Ovary (tissue), 10 donors: ENCODE measurements at regions of chr3 and their contacts with region 1.

Region 1: DNA sequence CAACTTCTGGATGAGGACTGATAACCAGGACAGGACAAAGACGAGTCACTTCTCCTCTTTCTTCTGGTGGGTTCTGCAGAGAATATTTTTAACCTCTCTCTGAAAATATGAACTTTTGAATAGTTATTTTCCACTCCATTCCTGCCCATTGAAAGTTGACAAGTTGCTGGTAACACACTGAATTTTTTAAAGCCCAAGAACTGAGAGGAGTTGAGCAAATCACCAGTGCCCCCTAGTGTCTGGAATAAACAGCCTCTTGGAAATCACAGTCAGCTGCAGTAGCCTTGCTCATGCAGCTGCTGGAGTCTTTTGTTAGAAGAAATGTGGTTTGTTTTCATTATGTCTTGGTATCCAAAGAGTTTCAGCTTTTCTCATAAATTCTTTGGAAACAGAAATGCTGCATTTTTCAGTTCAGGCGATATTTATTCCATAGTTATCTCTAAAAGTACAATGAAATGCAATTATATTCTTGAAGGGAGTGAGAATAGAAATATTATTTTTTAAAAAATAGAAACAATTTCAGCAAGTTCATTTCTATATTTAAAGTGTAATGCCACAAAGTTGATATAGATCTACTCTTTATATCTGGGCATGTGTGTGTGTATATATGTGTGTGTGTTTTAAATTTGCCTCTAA is 741.0 kb upstream of the CBLB start:
- DNase-seq: peak; percentile 44 to 81 (median 63)
- H3K4me3 ChIP-seq: no peak overlapping the region
- H3K27ac ChIP-seq: peak overlapping the region in 1 of 2 donors; percentile 21
- H3K4me1 ChIP-seq: peaks cover 2% of the 10 kb centered on the region
- H3K27me3 ChIP-seq: no peaks in the 10 kb centered on the region
- CTCF ChIP-seq: peak; percentile 72 to 78 (median 73)
- EP300 ChIP-seq: no peak
- POLR2A ChIP-seq: no peak

Region 2: DNA sequence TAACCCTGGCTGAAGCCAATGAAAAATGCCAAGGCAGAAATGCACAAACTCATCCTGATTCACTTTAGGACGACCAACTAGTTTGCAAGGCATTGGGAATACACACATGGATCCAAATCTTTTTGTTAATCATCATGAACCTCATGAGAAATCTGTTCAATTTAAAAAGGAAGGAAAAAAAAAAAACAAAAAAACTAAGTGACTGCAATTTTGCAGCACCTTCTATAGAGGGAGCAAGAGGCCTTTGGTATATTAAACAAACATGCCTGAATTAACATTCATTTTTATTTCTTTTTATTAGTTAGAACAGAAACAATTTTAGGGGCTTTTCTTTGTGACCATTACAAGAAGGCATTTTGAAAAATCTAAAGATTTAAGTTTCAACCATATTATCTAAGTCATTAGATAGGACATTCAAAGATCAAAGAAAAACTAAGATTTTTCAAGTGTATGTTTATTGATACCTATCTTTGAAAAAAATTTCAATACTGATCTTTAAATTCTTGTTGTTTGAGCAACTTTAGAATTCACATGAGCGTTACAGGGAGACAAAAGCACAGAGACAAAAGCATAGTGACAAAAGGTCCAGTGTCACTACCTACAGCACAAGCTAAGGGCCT is 923.4 kb before region 1 on chr3:
- intact Hi-C with region 1: loop called in 2 of 4 experiments (anchors 5 to 10 kb)
- DNase-seq: no peak
- H3K4me3 ChIP-seq: no peak overlapping the region
- H3K27ac ChIP-seq: no peak overlapping the region
- H3K4me1 ChIP-seq: no peaks in the 10 kb centered on the region
- H3K27me3 ChIP-seq: no peaks in the 10 kb centered on the region
- CTCF ChIP-seq: peak; percentile 29 to 61 (median 55)
- EP300 ChIP-seq: no peak
- POLR2A ChIP-seq: no peak

Region 3: DNA sequence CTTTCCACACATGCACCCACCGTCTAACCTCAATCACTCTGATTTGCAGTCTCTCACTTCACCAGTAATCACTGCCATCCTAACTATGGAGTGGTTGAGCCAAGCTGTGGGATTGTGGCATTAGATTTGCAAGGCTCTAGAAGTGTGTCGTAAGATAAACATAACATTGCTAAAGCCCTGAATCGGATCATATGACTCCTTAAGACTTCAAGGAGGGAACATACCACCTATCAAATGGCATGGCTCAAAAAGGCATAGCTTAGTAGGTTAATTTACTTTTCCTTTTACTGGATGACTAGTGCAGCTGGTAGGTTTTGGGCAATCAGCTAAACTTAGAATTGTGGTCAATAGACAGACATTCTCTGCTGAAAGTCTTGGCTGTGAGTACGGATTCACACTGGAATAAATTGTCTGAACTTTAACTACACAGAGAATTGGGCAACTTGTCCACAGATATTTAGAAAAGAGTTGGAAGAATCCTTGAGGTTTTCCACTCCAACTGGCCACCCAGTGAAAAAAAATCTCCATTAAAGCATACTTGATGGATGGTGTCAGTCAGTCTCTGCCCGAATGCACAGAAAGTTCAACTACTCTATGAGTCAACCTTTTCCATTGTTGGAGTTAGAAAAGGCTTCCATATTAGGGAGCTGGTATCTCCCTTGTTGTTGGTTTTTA is 264.3 kb before region 1 on chr3:
- intact Hi-C with region 1: no loop called
- DNase-seq: no peak
- H3K4me3 ChIP-seq: no peak overlapping the region
- H3K27ac ChIP-seq: no peak overlapping the region
- H3K4me1 ChIP-seq: no peaks in the 10 kb centered on the region
- H3K27me3 ChIP-seq: no peaks in the 10 kb centered on the region
- CTCF ChIP-seq: no peak
- EP300 ChIP-seq: no peak
- POLR2A ChIP-seq: no peak